Activated naive CD4-positive, alpha-beta T cell treated with anti-CD3 and anti-CD28 coated beads for 36 hours (primary cell): ENCODE measurements at regions of chr21 and their contacts with region 1.

Region 1: DNA sequence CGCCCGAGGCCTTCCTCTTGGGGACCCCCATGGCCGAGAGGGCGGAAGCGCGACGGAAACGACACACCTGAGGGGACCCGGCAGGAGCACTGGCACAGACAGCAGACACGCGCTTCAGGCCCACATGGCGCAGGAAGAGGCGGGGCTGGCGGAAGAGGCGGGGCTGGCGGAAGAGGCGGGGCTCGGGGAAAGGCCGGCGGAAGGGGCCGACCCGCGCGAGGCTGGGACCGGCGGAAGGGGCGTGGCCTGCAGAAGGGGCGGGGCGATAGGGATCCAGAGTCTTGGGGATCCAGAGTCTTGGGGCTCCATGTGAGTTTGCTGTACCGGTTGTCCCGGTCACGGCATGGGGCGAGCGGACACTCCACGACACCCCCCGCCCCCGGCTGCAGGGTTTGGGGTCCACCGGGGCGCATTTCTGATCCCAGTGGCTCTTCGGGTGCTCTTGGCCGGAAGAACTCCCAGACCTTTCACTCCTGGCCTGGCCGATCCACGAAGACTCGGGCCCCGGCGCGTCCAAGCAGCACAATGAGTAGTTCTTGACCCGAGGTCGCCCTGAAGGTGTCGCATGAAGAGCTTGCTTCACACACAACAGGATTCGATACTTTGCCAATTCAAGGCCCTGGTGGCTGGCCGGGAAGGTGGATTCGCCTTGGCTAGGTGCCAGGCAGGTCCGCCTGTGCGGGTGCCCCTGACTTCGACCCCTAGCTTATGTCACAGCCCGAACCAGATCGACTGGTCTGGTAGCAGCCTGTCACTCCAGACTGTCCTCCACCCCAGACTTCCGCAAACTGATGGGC is at the start of gene URB1:
- DNase-seq: peak; percentile 94
- H3K4me3 Mint-ChIP-seq: peak within 1 kb of the TSS; percentile 83
- H3K27ac Mint-ChIP-seq: peak within 1 kb of the TSS; percentile 77
- H3K4me1 Mint-ChIP-seq: peaks cover 46% of the 10 kb centered on the region
- H3K27me3 Mint-ChIP-seq: no peaks in the 10 kb centered on the region
- total RNA-seq, gene URB1: 20.8 to 21.4 TPM

Region 2: DNA sequence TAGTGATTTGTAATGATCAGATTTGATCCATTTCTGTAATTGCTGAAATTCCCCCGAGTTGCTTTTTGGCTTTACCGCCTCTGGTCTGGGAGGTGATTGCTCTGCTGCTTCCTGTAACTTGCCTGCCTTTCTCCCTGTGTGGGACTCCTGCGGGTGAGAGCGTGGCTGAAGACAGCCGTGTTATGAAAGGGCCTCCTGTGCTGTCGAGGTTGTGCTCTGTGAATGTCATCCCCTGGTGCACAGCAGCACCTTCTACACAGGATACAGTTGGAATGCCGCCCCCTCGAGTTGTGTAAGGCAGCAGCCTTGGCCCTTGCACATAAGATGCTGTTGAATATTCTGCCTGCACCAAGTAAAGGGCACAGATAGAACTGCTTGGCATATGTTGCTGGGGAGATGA is 727.7 kb before region 1 on chr21:
- CTCF ChIA-PET with region 1: no interaction called
- intact Hi-C with region 1: loop called (anchors 5 kb)
- DNase-seq: peak; percentile 66
- H3K4me3 Mint-ChIP-seq: peak overlapping the region; percentile 17
- H3K27ac Mint-ChIP-seq: peak overlapping the region; percentile 48
- H3K4me1 Mint-ChIP-seq: peaks cover 93% of the 10 kb centered on the region
- H3K27me3 Mint-ChIP-seq: no peaks in the 10 kb centered on the region

Region 3: GRCh38 chr21:32359711-32360260 is 33.3 kb before region 1 on chr21:
- CTCF ChIA-PET with region 1: no interaction called
- intact Hi-C with region 1: no loop called
- DNase-seq: no peak
- H3K4me3 Mint-ChIP-seq: no peak overlapping the region
- H3K27ac Mint-ChIP-seq: no peak overlapping the region
- H3K4me1 Mint-ChIP-seq: no peaks in the 10 kb centered on the region
- H3K27me3 Mint-ChIP-seq: no peaks in the 10 kb centered on the region

Region 4: GRCh38 chr21:32612075-32612998 is 219.3 kb after region 1 on chr21 and contains the start of gene CFAP298:
- CTCF ChIA-PET with region 1: interaction called, 5 read pairs
- intact Hi-C with region 1: loop called (anchors 1 kb)
- DNase-seq: peak; percentile 88
- H3K4me3 Mint-ChIP-seq: peak within 1 kb of the TSS; percentile 98
- H3K27ac Mint-ChIP-seq: peak within 1 kb of the TSS; percentile 83
- H3K4me1 Mint-ChIP-seq: peaks cover 13% of the 10 kb centered on the region
- H3K27me3 Mint-ChIP-seq: no peaks in the 10 kb centered on the region
- total RNA-seq, gene CFAP298: 33.3 to 35.6 TPM

Region 5: DNA sequence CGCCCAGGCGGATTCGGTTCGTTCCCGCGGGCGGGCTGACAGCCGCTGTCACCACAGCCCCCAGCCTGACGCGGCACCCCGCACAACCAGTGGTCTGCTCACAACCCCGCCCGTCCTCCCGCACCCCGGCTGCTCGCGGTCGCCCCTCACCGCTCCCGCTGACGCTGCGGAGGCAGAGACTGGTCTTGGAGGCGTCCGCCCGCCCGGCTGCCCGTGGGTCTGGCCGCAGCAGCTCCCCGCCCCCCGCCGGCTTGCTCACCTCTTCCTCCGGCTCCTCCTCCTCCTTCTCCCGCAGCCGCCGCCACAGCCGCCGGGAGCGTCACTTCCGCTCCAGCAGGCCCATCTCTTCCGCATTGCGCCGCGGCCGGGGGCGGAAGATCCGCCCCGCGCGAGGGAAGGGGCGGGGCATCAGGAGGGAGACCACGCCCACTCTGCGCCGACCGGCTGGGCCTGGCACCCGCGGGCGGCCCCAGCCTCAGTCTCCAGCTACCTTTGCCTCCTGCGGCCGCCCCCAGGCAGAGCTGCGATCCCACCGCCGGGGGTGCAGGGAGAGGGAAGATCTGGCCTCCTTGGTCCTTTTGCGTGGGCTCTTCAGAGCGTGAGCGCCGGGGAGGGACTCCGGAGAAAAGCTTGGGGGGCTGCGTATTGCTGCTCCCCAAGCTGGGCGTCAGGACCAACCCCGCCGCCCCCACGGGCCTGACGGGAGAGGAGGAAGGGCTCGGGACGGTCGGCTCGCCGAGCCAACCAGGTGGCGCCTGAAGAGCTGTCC is 334.8 kb after region 1 on chr21 and contains the start of gene SYNJ1:
- CTCF ChIA-PET with region 1: no interaction called
- intact Hi-C with region 1: loop called (anchors 1 kb)
- DNase-seq: peak; percentile 94
- H3K4me3 Mint-ChIP-seq: peak within 1 kb of the TSS; percentile 96
- H3K27ac Mint-ChIP-seq: peak within 1 kb of the TSS; percentile 88
- H3K4me1 Mint-ChIP-seq: peaks cover 45% of the 10 kb centered on the region
- H3K27me3 Mint-ChIP-seq: no peaks in the 10 kb centered on the region
- total RNA-seq, gene SYNJ1: 7.4 to 10.9 TPM